ENCODE measurements at regions of chr15 and their contacts with region 1.

Region 1: DNA sequence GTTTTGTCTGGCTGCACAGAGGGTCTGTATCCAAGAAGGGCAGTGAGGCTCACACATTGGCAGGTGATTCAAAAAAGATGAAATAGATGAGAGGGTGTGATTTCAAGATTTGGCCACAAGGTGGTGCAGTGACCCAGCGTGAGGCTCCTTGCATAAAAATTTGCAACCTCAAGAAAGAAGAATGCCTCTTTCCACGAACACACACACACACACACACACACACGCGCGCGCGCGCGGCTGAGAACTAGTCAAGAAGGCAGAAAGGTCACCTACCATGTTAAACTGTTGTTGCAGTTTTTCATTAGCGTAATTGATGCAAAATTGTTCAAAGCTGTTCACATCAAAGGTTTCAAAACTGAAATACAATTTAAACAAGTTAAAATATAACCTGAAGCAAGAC is 39.2 kb downstream of the MYO5C start:
- DNase-seq: peak; percentile 35 to 69
- ATAC-seq: peak; percentile 42 to 72
- H3K4me3 ChIP-seq: peak overlapping the region in 3 of 4 donors; percentile 7 to 48 (median 12)
- H3K27ac ChIP-seq: peak overlapping the region in 3 of 4 donors; percentile 35 to 55 (median 52)
- H3K4me1 ChIP-seq: peaks cover 19 to 21% of the 10 kb centered on the region in 2 donors
- H3K27me3 ChIP-seq: no peaks in the 10 kb centered on the region
- CTCF ChIP-seq: peak; percentile 76 to 81 (median 80)
- POLR2A ChIP-seq: no peak

Region 2: GRCh38 chr15:52337198-52337853 is 81.0 kb after region 1 on chr15:
- in situ Hi-C with region 1: no loop called
- intact Hi-C with region 1: loop called (anchors 5 kb)
- DNase-seq: no peak
- ATAC-seq: peak; percentile 44 to 71
- H3K4me3 ChIP-seq: no peak overlapping the region
- H3K27ac ChIP-seq: peak overlapping the region; percentile 40 to 70 (median 56)
- H3K4me1 ChIP-seq: peaks cover 8 to 22% of the 10 kb centered on the region in 2 donors
- H3K27me3 ChIP-seq: no peaks in the 10 kb centered on the region
- CTCF ChIP-seq: no peak
- POLR2A ChIP-seq: no peak

Region 3: GRCh38 chr15:52528991-52529926 is 272.9 kb after region 1 on chr15:
- in situ Hi-C with region 1: loop called in 1 of 4 experiments (anchors 10 kb)
- intact Hi-C with region 1: loop called (anchors 2 kb)
- DNase-seq: peak; percentile 61 to 66
- ATAC-seq: peak; percentile 81 to 86
- H3K4me3 ChIP-seq: peak overlapping the region; percentile 41 to 93 (median 62)
- H3K27ac ChIP-seq: peak overlapping the region; percentile 36 to 93 (median 85)
- H3K4me1 ChIP-seq: peaks cover 18 to 31% of the 10 kb centered on the region in 2 donors
- H3K27me3 ChIP-seq: no peaks in the 10 kb centered on the region
- CTCF ChIP-seq: peak in 1 of 5 experiments; percentile 1
- POLR2A ChIP-seq: peak in 1 of 2 donors; percentile 51

Region 4: GRCh38 chr15:52689562-52689961 is 433.2 kb after region 1 on chr15:
- in situ Hi-C with region 1: no loop called
- intact Hi-C with region 1: loop called (anchors 5 kb)
- DNase-seq: no peak
- ATAC-seq: peak in 1 of 2 donors; percentile 39
- H3K4me3 ChIP-seq: no peak overlapping the region
- H3K27ac ChIP-seq: peak overlapping the region in 1 of 4 donors; percentile 48
- H3K4me1 ChIP-seq: peaks cover 0 to 8% of the 10 kb centered on the region in 2 donors
- H3K27me3 ChIP-seq: no peaks in the 10 kb centered on the region
- CTCF ChIP-seq: no peak
- POLR2A ChIP-seq: no peak

Region 5: DNA sequence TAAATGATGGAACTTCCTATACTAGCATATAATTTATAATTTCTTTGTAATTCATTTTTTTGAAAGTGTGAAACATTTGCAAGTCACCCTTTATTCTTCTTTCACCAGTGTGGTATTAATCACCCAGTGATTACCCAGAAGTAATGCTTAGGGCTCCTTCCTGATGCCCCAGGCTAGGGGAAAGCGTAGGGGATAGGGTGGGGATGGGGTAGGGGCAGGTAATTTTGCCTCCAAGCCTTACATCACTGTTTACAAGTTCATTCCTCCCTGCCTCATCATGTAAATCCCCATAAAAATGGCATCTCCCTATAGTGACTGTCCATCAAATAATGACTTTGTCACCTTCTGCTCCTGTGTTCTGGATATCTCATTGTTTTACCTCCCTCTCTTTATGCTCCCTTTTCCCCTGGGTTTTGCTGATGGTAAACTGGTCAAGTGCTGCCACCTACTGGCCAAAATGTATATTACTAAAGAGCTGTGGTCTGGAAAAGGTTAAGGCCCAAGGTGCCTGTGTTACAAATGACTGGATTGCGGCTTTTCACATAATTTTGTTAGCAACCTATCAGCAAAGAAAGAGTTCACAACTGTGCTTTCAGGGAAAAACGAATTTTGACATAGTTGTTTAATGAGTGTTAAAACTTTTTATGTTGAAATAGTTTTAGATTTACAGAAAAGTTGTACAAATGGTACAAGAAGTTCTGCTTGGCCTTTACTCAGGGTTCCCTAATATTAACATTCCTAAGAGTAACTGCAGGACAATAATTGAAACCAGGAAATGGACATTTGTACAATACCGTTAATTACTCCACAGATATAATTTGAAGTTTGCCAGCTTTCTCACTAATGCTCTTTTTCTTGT is 479.1 kb after region 1 on chr15:
- in situ Hi-C with region 1: loop called (anchors 5 to 10 kb)
- intact Hi-C with region 1: loop called (anchors 1 kb)
- DNase-seq: peak; percentile 47 to 57
- ATAC-seq: peak; percentile 16 to 39
- H3K4me3 ChIP-seq: no peak overlapping the region
- H3K27ac ChIP-seq: peak overlapping the region in 3 of 4 donors; percentile 86 to 89 (median 86)
- H3K4me1 ChIP-seq: peaks cover 36 to 44% of the 10 kb centered on the region in 2 donors
- H3K27me3 ChIP-seq: no peaks in the 10 kb centered on the region
- CTCF ChIP-seq: peak; percentile 84 to 93 (median 85)
- POLR2A ChIP-seq: no peak

Measured in gastrocnemius medialis (tissue), 4 donors.